Panc1 (cell line): ENCODE measurements at regions of chr3 and their contacts with region 1.

Region 1: DNA sequence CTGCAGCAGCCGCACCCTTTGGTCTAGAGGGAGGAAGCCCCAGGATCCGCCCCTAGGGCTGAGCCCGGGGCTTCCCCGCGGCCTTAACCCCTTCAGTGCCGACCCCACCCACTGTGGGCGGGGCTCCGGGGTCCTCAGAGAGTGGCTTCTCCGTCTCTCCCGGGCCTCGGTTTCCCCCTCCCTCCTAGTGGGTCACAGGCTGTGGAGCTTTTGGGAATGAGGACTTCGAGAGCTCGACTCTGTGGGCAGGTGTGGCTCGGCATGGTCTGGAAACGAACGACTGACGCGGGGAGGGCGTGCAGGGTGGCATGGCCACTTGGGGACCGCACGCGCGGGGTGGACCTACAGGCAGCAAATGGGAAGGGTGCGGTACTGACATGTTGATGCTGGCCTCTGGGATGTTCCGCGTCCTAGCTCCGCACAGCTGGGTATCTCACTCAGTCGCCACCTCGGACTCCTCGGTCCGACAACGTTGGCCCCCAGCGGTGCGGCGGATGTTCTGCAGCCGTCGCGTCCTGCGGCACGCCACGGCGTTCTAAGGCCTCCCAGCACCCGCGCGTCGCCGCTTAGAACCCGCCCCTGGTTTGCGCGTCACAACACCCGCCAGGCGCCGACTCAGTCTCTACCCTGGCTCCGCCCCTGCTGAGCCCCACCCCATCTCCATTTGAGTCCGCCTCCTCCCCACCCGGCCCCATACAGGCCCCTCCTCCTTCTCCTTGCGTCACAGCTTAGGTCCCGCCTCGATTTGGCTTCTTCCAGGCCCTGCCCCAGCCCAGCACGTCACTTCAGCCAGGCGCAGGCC is at the starts of genes HYAL3 and NAA80:
- DNase-seq: peak; percentile 92
- ATAC-seq: peak; percentile 93
- H3K4me3 ChIP-seq: peak within 1 kb of the TSS; percentile 65 to 77
- H3K27ac ChIP-seq: peak within 1 kb of the TSS; percentile 79
- H3K4me1 ChIP-seq: peaks cover 4% of the 10 kb centered on the region
- H3K27me3 ChIP-seq: no peaks in the 10 kb centered on the region
- CTCF ChIP-seq: no peak; the same call in 1 of the 2 replicates
- total RNA-seq, gene HYAL3: 3.9 TPM
- total RNA-seq, gene NAA80: 7.2 TPM

Region 2: GRCh38 chr3:49570028-49570654 is 728.9 kb before region 1 on chr3:
- CTCF ChIA-PET with region 1: no interaction called
- POLR2A ChIA-PET with region 1: no interaction called
- in situ Hi-C with region 1: no loop called
- intact Hi-C with region 1: no loop called
- DNase-seq: no peak
- ATAC-seq: no peak
- H3K4me3 ChIP-seq: no peak overlapping the region
- H3K27ac ChIP-seq: no peak overlapping the region
- H3K4me1 ChIP-seq: no peaks in the 10 kb centered on the region
- H3K27me3 ChIP-seq: no peaks in the 10 kb centered on the region
- CTCF ChIP-seq: no peak

Region 3: GRCh38 chr3:50237754-50238548 is 61.1 kb before region 1 on chr3:
- CTCF ChIA-PET with region 1: no interaction called
- POLR2A ChIA-PET with region 1: interaction called, 10 read pairs
- in situ Hi-C with region 1: no loop called
- intact Hi-C with region 1: no loop called
- DNase-seq: no peak
- ATAC-seq: peak; percentile 54
- H3K4me3 ChIP-seq: peak overlapping the region; percentile 83 to 86
- H3K27ac ChIP-seq: peak overlapping the region; percentile 83
- H3K4me1 ChIP-seq: peaks cover 27% of the 10 kb centered on the region
- H3K27me3 ChIP-seq: no peaks in the 10 kb centered on the region
- CTCF ChIP-seq: no peak